Activated CD8-positive, alpha-beta T cell treated with anti-CD3 and anti-CD28 coated beads for 36 hours (primary cell): ENCODE measurements at regions of chr1 and their contacts with region 1.

Region 1: DNA sequence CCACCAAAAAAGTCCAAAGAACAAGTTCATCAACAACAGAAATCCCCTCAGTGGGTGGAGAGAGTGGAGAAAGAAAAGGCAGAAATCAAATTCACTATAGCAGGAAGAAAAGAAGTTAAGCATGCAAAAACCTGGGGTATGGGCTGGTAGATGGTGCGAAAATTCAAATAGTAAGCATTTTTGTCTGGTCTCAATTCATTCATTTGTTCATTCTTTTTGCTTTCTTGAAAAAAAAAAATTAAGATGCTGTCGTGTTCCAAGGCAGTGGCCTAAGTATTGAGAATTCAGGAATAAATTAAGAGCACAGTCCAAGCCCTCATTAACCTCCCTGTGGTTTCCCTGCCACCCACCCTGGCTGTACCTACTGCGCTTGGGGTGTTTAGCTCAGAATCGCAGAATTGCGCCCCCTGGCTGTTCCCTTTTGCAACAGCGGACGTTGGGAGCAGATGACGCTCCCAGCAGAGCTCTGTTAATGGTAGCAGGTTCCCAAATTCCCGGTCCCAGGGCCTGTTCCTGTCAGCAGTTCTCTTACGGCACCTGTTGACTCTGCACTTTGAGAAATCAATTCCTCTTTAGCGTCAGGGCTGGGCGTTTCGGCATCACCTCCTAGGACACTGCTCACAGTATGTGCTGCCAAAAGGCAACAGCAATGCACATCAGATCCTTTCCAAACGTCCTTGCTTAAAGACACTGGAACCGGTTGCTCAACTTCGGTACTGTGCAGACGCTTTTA is 34.0 kb upstream of the SSX2IP start:
- DNase-seq: peak; percentile 68
- ATAC-seq: peak; percentile 75
- H3K4me3 Mint-ChIP-seq: no peak overlapping the region
- H3K27ac Mint-ChIP-seq: no peak overlapping the region
- H3K4me1 Mint-ChIP-seq: peaks cover 9% of the 10 kb centered on the region
- H3K27me3 Mint-ChIP-seq: no peaks in the 10 kb centered on the region
- CTCF ChIP-seq: peak; percentile 78

Region 2: DNA sequence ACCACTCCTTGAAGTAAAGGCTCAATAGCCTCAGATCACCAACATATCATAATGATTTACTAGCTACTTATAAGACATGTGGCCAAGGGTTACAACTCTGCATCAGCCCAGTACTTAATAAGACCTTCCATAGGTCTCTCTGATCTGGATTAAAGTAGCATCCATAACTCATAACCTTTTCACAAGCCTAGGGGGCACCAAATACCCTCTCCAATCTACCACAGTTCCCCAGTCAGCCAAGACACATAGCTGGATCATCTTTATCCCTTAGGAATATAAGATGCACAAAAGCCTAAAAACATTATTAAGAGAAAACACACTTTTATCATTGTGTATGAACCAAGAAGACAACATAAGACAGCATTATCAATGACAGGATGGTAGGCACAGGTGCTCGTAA is 56.1 kb before region 1 on chr1:
- CTCF ChIA-PET with region 1: interaction called, 18 read pairs
- POLR2A ChIA-PET with region 1: no interaction called
- intact Hi-C with region 1: no loop called
- DNase-seq: no peak
- ATAC-seq: peak; percentile 42
- H3K4me3 Mint-ChIP-seq: no peak overlapping the region
- H3K27ac Mint-ChIP-seq: no peak overlapping the region
- H3K4me1 Mint-ChIP-seq: peaks cover 6% of the 10 kb centered on the region
- H3K27me3 Mint-ChIP-seq: no peaks in the 10 kb centered on the region
- CTCF ChIP-seq: peak; percentile 15

Region 3: DNA sequence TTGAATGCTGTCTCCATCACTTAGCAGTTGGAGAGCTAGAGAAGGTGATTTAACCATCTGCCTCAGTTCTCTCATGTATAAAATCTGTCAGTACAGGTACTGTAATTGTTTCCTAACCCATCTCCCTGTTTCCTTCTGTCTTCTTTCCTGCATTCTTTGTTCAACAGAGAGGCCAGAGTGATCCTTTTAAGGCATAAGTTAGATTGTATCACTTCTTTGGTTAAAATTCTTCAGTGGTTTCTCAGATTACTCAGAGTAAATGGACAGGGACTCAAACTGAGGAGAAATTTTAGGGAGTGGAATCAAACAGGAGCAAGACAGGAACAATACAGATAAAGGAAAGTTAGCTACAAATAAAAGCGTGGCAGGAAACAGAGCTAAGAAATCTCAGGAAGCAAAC is 11.2 kb after region 1 on chr1:
- CTCF ChIA-PET with region 1: interaction called, 16 read pairs
- POLR2A ChIA-PET with region 1: no interaction called
- intact Hi-C with region 1: no loop called
- DNase-seq: no peak
- ATAC-seq: no peak
- H3K4me3 Mint-ChIP-seq: no peak overlapping the region
- H3K27ac Mint-ChIP-seq: no peak overlapping the region
- H3K4me1 Mint-ChIP-seq: no peaks in the 10 kb centered on the region
- H3K27me3 Mint-ChIP-seq: peaks cover 10% of the 10 kb centered on the region
- CTCF ChIP-seq: no peak

Region 4: GRCh38 chr1:84823511-84823910 is 99.2 kb after region 1 on chr1:
- CTCF ChIA-PET with region 1: no interaction called
- POLR2A ChIA-PET with region 1: no interaction called
- intact Hi-C with region 1: no loop called
- DNase-seq: no peak
- ATAC-seq: no peak
- H3K4me3 Mint-ChIP-seq: no peak overlapping the region
- H3K27ac Mint-ChIP-seq: no peak overlapping the region
- H3K4me1 Mint-ChIP-seq: peaks cover 13% of the 10 kb centered on the region
- H3K27me3 Mint-ChIP-seq: no peaks in the 10 kb centered on the region
- CTCF ChIP-seq: no peak